Right ventricle myocardium inferior (tissue), 1 donor: ENCODE measurements at regions of chr17 and their contacts with region 1.

Region 1: GRCh38 chr17:69523244-69523861 is 108.9 kb downstream of the MAP2K6 start:
- DNase-seq: no peak
- ATAC-seq: peak; percentile 73

Region 2: GRCh38 chr17:69335058-69335457 is 188.3 kb before region 1 on chr17:
- intact Hi-C with region 1: loop called (anchors 1 kb)
- DNase-seq: no peak
- ATAC-seq: no peak

Region 3: DNA sequence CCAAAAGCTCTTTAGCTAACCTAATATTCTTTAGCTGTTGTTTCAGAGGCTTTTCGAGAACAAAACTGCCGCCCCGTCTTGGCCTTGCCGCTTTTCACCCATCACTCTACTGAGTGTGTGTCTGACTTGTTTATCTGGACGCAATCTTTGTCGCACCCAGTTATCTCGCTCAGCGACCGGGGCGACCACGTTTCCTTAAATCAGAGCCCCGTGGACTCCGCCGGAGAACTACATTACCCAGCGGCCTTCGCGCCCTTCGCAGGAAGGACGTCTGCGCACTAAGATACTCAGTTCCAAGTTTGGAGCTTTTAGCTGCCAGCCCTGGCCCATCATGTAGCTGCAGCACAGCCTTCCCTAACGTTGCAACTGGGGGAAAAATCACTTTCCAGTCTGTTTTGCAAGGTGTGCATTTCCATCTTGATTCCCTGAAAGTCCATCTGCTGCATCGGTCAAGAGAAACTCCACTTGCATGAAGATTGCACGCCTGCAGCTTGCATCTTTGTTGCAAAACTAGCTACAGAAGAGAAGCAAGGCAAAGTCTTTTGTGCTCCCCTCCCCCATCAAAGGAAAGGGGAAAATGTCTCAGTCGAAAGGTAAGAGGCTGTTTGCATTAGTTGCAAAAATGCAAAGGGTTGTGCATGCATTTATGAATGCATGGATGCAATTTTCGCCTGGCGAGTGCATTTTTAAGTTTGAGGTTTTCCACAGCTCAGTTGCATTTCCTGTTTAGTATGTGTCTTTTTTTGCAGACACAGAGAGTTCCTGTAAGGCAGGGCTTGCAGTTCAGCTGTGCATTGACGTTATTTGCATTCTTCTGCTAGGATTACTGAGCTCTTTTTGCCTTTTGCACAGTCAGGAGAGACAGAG is 108.7 kb before region 1 on chr17 and contains the start of gene MAP2K6:
- intact Hi-C with region 1: loop called (anchors 5 kb)
- DNase-seq: peak; percentile 92
- ATAC-seq: peak; percentile 96
- total RNA-seq, gene MAP2K6: 3.8 TPM

Region 4: DNA sequence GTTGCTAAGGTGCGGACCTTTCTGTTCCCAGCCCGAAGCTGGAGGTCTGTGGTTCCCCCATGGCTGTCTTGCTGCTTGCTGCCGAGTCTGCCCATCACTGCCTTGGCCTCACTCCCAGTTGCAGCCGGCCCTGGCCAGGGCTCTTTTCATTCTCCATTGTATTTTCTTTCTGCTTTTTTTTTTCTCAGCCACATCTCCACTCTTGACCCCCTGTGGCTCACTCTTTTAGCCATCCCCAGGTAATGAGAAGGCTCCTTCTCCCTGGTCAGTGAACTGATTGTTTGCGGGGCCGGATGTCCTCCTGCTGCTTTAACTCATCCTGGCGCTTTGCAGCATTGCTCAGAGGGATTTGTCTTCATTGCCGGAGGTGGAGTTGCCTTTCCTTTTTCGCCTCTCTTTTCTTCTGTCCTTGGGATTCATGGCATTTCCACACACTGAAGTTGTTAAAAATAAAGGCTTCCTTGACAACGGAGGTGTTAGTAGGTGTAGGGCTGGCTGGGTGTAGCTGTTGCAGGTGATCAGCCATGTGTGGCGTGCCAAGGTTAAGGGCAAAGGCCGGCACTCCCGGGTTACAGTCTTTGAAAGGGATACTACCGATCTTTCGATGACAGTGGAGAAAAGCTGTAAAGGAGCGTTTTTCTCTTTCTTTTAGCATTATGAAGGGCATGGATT is 74.8 kb before region 1 on chr17:
- intact Hi-C with region 1: no loop called
- DNase-seq: no peak
- ATAC-seq: peak; percentile 65

Region 5: DNA sequence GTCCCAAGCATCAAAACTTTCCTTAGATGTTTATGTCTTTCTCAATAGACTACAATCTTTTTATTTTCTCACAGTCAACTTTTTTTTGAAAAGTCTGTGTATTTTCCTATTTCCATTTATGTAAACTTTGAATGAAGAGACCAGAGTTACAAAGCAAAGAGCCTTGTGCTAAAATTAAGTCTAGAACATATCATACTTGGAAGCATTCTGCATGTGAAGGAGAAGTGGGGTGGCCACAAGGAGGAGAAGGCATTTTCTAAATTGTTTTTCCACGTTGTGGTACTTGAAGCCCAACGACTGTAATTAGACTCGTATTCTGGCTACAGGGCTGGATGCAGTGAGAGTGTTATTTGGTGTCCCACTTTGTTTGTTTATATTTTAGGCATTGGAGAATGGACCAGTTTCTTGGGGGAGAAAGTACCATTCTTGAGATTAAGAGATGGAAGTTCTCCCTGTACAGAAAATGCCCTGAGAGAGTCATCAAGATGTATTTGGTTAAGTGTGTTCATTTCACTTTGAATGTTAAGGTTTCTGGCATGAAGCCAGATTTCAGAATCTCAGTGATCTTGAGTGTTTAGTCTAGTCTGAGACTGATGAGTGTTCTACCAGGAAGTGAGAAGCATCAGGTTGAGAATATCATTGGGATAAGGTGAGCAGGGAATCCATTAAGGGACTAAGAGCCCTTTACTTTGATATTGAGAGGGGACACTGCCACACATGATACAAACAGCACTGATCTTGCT is 37.3 kb before region 1 on chr17:
- intact Hi-C with region 1: loop called (anchors 5 kb)
- DNase-seq: no peak
- ATAC-seq: peak; percentile 35

Region 6: DNA sequence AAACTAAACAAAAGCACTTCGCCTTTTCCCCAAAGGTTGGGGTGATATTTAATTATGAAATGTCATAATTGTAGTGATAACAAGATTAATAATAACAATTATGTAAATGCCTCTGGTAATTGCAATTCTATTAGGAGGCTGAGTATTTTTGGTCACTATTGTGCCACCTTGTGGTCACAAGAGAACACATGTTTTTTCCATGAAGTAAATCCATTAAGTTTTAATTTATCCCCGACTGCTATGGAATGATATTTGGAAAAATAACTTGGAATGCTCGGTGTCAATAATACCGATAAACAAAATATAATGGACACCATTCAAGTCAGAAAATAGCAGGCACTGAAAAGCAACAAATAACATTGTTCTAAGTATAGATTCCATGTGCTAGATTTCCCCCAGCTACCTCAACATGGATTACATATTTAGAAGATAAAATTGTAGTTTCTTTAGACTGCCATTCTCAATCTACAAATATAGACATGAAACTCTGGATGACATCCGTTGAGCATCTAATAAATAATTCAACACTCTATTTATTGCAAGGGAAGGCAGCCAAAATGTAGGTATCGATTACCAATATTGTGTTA is 621.0 kb after region 1 on chr17:
- intact Hi-C with region 1: loop called (anchors 2 kb)
- DNase-seq: no peak
- ATAC-seq: no peak

Region 7: GRCh38 chr17:70552230-70552981 is 1029.1 kb after region 1 on chr17:
- intact Hi-C with region 1: loop called (anchors 5 kb)
- DNase-seq: no peak
- ATAC-seq: peak; percentile 69

Region 8: GRCh38 chr17:70622368-70623260 is 1099.3 kb after region 1 on chr17:
- intact Hi-C with region 1: loop called (anchors 2 kb)
- DNase-seq: no peak
- ATAC-seq: peak; percentile 72